ENCODE measurements at regions of chr3 and their contacts with region 1.

Region 1: GRCh38 chr3:71305231-71306206 is 278.0 kb downstream of the FOXP1 start:
- DNase-seq: peak; percentile 44
- ATAC-seq: peak; percentile 90

Region 2: DNA sequence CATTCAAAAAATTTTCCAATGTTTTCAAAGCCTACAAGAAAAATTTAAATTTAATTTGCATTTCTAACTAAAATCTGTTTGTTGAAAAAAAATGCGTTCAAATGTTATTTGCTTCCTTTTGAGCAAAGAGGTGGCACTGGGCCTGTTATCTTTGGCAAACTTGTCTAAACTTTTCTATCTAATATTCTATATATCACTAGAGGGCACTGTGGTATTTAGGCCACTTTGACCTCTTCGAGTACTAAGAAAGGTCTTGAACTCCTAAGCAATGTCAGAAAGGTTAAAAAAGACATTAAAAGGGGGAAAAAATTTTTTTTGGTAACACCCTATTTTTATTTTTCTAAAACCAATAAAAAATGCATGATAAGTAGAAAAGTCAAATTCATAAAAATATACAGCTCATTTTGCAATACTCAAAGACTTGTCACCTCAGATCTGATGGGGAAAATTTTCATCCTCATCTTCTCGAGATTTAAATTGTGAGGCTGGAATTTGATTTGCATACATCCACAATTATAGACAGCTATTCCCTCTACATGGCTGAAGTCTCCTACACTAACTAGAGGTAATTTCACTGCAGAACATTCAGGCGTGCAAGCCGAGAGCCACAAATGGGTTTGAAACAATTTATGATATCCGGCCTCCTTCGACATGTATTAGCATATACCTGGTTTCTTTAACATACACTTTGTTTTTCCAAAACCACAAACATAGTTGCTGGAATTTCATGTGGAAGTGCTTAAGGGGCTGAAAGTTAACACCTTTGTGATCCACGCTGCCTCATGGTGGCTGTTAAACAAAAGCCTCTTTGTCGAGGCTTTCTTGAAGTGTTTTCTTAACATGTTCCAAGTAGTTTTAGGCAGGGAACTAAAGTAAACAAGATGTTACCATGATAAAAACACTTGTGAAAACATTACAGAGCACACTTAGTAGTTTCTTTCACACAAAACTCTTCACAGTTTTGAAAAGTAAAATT is 298.4 kb before region 1 on chr3:
- intact Hi-C with region 1: loop called (anchors 10 kb)
- DNase-seq: no peak
- ATAC-seq: peak; percentile 73

Region 3: GRCh38 chr3:71744738-71745137 is 439.2 kb after region 1 on chr3:
- intact Hi-C with region 1: no loop called
- DNase-seq: no peak
- ATAC-seq: no peak

Measured in left ventricle myocardium superior (tissue), 1 donor.